ENCODE measurements at regions of chr2 and their contacts with region 1.

Region 1: GRCh38 chr2:217785544-217786045 is 217.2 kb downstream of the TNS1 start:
- DNase-seq: peak; percentile 88
- ATAC-seq: peak; percentile 71
- H3K4me3 Mint-ChIP-seq: no peak overlapping the region
- H3K27ac Mint-ChIP-seq: peak overlapping the region; percentile 2
- H3K4me1 Mint-ChIP-seq: peaks cover 7% of the 10 kb centered on the region
- H3K27me3 Mint-ChIP-seq: no peaks in the 10 kb centered on the region

Region 2: DNA sequence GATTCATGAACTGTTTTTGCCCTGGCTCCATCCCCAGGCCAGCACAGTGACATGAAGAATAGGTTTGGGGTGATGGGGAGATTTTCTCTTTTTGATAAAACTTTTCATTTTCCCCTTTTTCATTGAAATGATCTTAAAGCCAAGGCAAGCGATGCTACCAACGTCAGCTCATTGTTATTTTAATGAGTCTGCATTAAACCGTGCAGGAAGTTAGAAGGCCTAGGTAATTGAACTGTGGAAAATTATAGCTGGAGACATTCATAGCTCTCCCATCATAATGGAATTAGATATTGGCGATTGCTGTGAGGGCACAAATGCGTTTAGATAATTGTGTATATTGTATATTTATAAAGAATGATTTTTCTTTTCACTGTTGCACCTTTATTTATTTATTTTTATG is 1340.1 kb before region 1 on chr2:
- CTCF ChIA-PET with region 1: no interaction called
- POLR2A ChIA-PET with region 1: no interaction called
- intact Hi-C with region 1: no loop called
- DNase-seq: no peak
- ATAC-seq: no peak
- H3K4me3 Mint-ChIP-seq: no peak overlapping the region
- H3K27ac Mint-ChIP-seq: no peak overlapping the region
- H3K4me1 Mint-ChIP-seq: no peaks in the 10 kb centered on the region
- H3K27me3 Mint-ChIP-seq: no peaks in the 10 kb centered on the region

Region 3: DNA sequence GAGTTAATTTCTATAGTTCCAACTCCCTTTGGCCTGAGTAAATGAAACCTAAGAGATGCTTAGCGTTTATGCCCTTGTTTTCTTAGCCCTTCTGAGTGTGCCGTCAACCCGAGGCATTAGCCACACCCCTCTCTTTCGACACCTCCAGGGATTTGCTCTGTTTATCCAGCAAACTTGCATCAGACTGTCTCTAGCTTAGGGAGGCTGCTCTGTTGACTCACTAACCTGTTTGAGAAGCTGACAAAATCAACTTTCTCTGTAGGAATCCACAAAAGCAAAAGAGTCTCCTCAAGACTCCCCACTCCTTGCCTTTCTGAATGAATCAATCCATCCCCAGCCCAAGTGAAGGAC is 100.4 kb before region 1 on chr2:
- CTCF ChIA-PET with region 1: no interaction called
- POLR2A ChIA-PET with region 1: no interaction called
- intact Hi-C with region 1: no loop called
- DNase-seq: no peak
- ATAC-seq: no peak
- H3K4me3 Mint-ChIP-seq: no peak overlapping the region
- H3K27ac Mint-ChIP-seq: no peak overlapping the region
- H3K4me1 Mint-ChIP-seq: no peaks in the 10 kb centered on the region
- H3K27me3 Mint-ChIP-seq: peaks cover 2% of the 10 kb centered on the region

Region 4: GRCh38 chr2:217798743-217799562 is 13.4 kb after region 1 on chr2:
- CTCF ChIA-PET with region 1: interaction called, 14 read pairs
- POLR2A ChIA-PET with region 1: no interaction called
- intact Hi-C with region 1: no loop called
- DNase-seq: no peak
- ATAC-seq: no peak
- H3K4me3 Mint-ChIP-seq: no peak overlapping the region
- H3K27ac Mint-ChIP-seq: no peak overlapping the region
- H3K4me1 Mint-ChIP-seq: no peaks in the 10 kb centered on the region
- H3K27me3 Mint-ChIP-seq: no peaks in the 10 kb centered on the region

Region 5: GRCh38 chr2:217988014-217988839 is 202.6 kb after region 1 on chr2:
- CTCF ChIA-PET with region 1: interaction called, 105 read pairs
- POLR2A ChIA-PET with region 1: no interaction called
- intact Hi-C with region 1: loop called (anchors 1 kb)
- DNase-seq: peak; percentile 87
- ATAC-seq: peak; percentile 68
- H3K4me3 Mint-ChIP-seq: no peak overlapping the region
- H3K27ac Mint-ChIP-seq: no peak overlapping the region
- H3K4me1 Mint-ChIP-seq: peaks cover 5% of the 10 kb centered on the region
- H3K27me3 Mint-ChIP-seq: peaks cover 4% of the 10 kb centered on the region

Region 6: DNA sequence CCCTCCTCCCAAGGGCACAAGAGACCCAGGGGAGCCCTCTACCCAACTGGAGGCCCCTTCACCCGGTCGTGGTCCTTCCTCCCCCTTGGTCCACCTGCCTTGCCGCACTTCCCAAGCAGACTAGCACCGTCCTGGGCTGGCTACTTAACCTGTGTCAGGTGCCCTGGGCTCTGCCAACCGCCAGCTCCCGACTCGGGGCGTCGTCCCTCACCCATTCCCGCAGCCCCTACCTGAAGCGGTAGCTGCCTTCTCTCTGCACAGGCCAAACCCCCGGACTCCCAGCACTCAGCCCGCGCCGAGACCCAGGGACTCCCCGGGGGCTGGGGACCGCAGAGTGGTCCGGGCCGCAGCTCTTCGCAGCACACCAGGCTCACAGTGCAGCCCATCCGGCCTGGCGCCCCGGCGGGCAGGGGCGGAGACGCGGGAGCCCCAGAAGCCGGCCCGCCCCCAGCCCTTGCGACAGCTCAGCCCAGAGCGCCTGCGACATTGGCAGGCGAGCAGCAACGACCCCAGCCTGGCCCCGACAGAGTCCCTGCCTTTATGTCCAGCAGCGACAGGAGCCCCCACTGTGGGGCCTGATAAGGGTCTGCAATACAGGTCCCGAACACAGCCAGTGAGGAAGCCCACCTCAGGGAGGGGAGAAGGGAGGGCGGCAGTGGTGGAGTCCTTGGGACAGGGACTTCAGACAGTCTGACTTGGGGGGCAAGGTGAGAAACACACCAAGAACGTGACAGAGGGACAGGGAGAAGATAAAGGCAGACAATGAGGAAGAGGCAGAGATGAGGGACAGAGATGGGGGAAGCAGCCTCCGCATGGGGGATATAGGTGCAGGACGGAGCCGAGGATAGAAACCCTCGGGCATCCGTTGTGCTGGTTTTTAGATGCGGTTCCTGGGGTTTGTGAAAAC is 248.2 kb after region 1 on chr2:
- CTCF ChIA-PET with region 1: interaction called, 10 read pairs
- POLR2A ChIA-PET with region 1: no interaction called
- intact Hi-C with region 1: loop called (anchors 1 kb)
- DNase-seq: no peak
- ATAC-seq: peak; percentile 12
- H3K4me3 Mint-ChIP-seq: peak overlapping the region; percentile 54
- H3K27ac Mint-ChIP-seq: no peak overlapping the region
- H3K4me1 Mint-ChIP-seq: peaks cover 8% of the 10 kb centered on the region
- H3K27me3 Mint-ChIP-seq: peaks cover 2% of the 10 kb centered on the region

Region 7: DNA sequence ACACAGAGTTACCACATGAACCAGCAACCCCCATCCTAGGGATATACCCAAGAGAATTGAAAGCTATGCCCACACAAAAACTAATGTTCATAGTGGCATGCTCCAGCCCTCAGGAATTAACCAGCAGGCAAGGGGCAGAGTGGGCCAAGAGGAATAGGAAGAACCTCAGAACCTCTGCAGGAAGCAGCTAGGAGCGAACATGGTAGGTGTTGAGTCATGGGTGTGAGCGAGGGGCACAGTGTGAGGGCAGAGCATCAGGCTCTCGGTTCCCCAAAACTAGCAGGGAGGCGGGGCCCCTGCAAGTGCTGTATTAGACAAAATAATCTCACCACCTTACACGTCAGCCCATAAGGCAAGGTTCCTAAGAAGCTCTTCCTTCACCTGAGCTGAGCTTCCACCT is 277.9 kb after region 1 on chr2:
- CTCF ChIA-PET with region 1: interaction called, 13 read pairs
- POLR2A ChIA-PET with region 1: no interaction called
- intact Hi-C with region 1: loop called (anchors 1 kb)
- DNase-seq: no peak
- ATAC-seq: no peak
- H3K4me3 Mint-ChIP-seq: no peak overlapping the region
- H3K27ac Mint-ChIP-seq: no peak overlapping the region
- H3K4me1 Mint-ChIP-seq: peaks cover 2% of the 10 kb centered on the region
- H3K27me3 Mint-ChIP-seq: peaks cover 24% of the 10 kb centered on the region

Measured in activated CD4-positive, alpha-beta T cell treated with anti-CD3 and anti-CD28 coated beads for 36 hours (primary cell).